Activated CD8-positive, alpha-beta T cell treated with anti-CD3 and anti-CD28 coated beads, Interleukin-2, amount 10 ng/mL, durations not matched to agents 7 days and 5 days (primary cell): ENCODE measurements at regions of chr2 and their contacts with region 1.

Region 1: GRCh38 chr2:112726497-112727190 is 5.8 kb downstream of the NT5DC4 start:
- DNase-seq: peak; percentile 92
- ATAC-seq: peak; percentile 98
- H3K4me3 Mint-ChIP-seq: no peak overlapping the region
- H3K27ac Mint-ChIP-seq: peak overlapping the region; percentile 54
- H3K4me1 Mint-ChIP-seq: peaks cover 12% of the 10 kb centered on the region
- H3K27me3 Mint-ChIP-seq: peaks cover 12% of the 10 kb centered on the region

Region 2: GRCh38 chr2:112601751-112602150 is 124.9 kb before region 1 on chr2:
- CTCF ChIA-PET with region 1: interaction called, 80 read pairs
- POLR2A ChIA-PET with region 1: interaction called, 4 read pairs
- DNase-seq: no peak
- ATAC-seq: no peak
- H3K4me3 Mint-ChIP-seq: no peak overlapping the region
- H3K27ac Mint-ChIP-seq: no peak overlapping the region
- H3K4me1 Mint-ChIP-seq: peaks cover 5% of the 10 kb centered on the region
- H3K27me3 Mint-ChIP-seq: no peaks in the 10 kb centered on the region

Region 3: GRCh38 chr2:112626604-112627059 is 100.0 kb before region 1 on chr2:
- CTCF ChIA-PET with region 1: interaction called, 335 read pairs
- POLR2A ChIA-PET with region 1: interaction called, 6 read pairs
- DNase-seq: peak; percentile 79
- ATAC-seq: peak; percentile 50
- H3K4me3 Mint-ChIP-seq: peak overlapping the region; percentile 30
- H3K27ac Mint-ChIP-seq: peak overlapping the region; percentile 85
- H3K4me1 Mint-ChIP-seq: peaks cover 78% of the 10 kb centered on the region
- H3K27me3 Mint-ChIP-seq: peaks cover 4% of the 10 kb centered on the region

Region 4: GRCh38 chr2:112685271-112685884 is 41.3 kb before region 1 on chr2:
- CTCF ChIA-PET with region 1: interaction called, 50 read pairs
- POLR2A ChIA-PET with region 1: no interaction called
- DNase-seq: no peak
- ATAC-seq: peak; percentile 45
- H3K4me3 Mint-ChIP-seq: no peak overlapping the region
- H3K27ac Mint-ChIP-seq: no peak overlapping the region
- H3K4me1 Mint-ChIP-seq: peaks cover 22% of the 10 kb centered on the region
- H3K27me3 Mint-ChIP-seq: peaks cover 13% of the 10 kb centered on the region

Region 5: GRCh38 chr2:112706170-112706664 is 20.4 kb before region 1 on chr2:
- CTCF ChIA-PET with region 1: interaction called, 49 read pairs
- POLR2A ChIA-PET with region 1: interaction called, 3 read pairs
- DNase-seq: peak; percentile 94
- ATAC-seq: peak; percentile 98
- H3K4me3 Mint-ChIP-seq: peak overlapping the region; percentile 58
- H3K27ac Mint-ChIP-seq: peak overlapping the region; percentile 71
- H3K4me1 Mint-ChIP-seq: peaks cover 41% of the 10 kb centered on the region
- H3K27me3 Mint-ChIP-seq: peaks cover 33% of the 10 kb centered on the region

Region 6: DNA sequence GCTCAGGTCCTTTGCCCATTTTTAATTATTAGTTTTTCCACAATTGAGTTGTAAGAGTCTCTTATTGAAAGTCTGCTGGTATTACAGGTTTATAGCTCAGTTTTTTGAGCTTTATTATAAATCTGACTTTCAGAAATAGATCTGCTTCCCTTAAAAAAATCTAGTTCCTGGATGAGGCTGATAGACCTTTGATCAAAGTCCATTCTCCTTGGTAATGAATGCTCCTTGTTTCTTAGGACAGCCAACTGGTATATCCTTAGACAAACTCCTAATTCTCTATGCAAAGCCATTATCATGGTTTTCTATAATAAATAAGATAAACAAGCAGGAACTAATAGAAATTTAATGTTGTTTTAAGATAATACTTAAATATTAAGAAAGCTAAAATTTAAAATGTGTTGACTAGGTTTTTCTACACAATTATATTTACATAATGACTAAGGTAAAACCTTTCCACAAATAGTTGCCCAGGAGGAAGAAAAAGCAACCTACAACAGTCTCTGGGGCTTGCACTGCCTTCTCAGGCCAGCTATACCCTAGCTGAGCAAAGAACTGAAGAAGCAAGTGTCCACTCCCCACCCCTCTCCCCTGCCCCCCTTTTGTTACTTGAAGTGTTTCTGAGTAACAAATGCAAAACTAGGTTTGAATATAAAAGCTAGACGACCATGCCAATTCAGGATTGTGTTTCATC is 11.0 kb after region 1 on chr2:
- CTCF ChIA-PET with region 1: interaction called, 27 read pairs
- POLR2A ChIA-PET with region 1: no interaction called
- DNase-seq: no peak
- ATAC-seq: no peak
- H3K4me3 Mint-ChIP-seq: no peak overlapping the region
- H3K27ac Mint-ChIP-seq: no peak overlapping the region
- H3K4me1 Mint-ChIP-seq: no peaks in the 10 kb centered on the region
- H3K27me3 Mint-ChIP-seq: no peaks in the 10 kb centered on the region

Region 7: DNA sequence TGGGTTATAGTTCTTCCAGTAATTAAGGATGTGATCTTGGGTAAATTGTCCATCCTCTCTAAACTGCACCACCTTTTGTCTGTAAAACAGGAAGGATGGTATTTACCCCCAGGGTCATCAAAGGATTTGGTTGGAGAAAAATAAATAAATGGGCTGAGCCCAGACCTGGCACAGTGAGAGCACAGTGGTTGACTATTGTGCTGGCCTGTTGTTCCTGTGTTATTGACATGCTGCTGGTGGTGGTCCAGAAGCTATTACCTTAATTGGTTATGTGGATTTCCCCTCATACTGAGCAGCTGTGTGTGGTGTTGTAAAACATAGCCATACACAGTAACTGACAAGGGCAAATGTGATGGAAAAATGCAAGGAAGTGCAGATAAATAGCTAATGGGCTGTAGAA is 183.6 kb after region 1 on chr2:
- CTCF ChIA-PET with region 1: no interaction called
- POLR2A ChIA-PET with region 1: no interaction called
- DNase-seq: no peak
- ATAC-seq: no peak
- H3K4me3 Mint-ChIP-seq: no peak overlapping the region
- H3K27ac Mint-ChIP-seq: no peak overlapping the region
- H3K4me1 Mint-ChIP-seq: peaks cover 2% of the 10 kb centered on the region
- H3K27me3 Mint-ChIP-seq: no peaks in the 10 kb centered on the region